ENCODE measurements at regions of chr2 and their contacts with region 1.

Region 1: GRCh38 chr2:84649487-84650142 is 133.3 kb downstream of the DNAH6 start:
- DNase-seq: no peak
- H3K4me3 Mint-ChIP-seq: no peak overlapping the region
- H3K27ac Mint-ChIP-seq: peak overlapping the region; percentile 7
- H3K4me1 Mint-ChIP-seq: peaks cover 59% of the 10 kb centered on the region
- H3K27me3 Mint-ChIP-seq: no peaks in the 10 kb centered on the region

Region 2: GRCh38 chr2:84619794-84620371 is 29.7 kb before region 1 on chr2:
- CTCF ChIA-PET with region 1: no interaction called
- POLR2A ChIA-PET with region 1: no interaction called
- intact Hi-C with region 1: no loop called
- DNase-seq: no peak
- H3K4me3 Mint-ChIP-seq: no peak overlapping the region
- H3K27ac Mint-ChIP-seq: no peak overlapping the region
- H3K4me1 Mint-ChIP-seq: no peaks in the 10 kb centered on the region
- H3K27me3 Mint-ChIP-seq: no peaks in the 10 kb centered on the region

Region 3: DNA sequence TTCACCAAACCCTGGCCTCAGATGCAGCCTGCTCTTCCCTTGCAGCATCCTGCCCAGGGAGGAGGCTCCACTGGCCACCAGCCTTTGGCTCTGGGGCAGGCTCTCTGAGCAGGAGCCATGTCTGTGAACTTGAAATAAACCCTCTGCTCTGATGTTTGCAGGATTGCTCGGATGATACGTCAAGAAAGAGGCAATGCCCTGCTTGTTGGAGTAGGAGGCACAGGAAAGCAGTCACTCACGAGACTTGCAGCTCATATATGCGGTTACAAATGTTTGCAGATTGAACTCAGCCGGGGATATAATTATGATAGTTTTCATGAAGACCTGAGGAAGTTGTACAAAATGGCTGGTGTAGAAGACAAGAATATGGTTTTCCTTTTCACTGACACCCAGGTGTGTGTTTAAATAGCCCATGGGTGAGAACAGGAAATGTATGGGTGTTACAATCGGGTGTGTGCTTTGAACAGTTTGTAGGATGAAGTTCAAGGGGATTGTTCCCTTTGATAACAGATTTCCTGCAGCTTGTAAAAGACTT is 44.5 kb after region 1 on chr2:
- CTCF ChIA-PET with region 1: no interaction called
- POLR2A ChIA-PET with region 1: no interaction called
- intact Hi-C with region 1: loop called (anchors 5 kb)
- DNase-seq: peak; percentile 25
- H3K4me3 Mint-ChIP-seq: peak overlapping the region; percentile 5
- H3K27ac Mint-ChIP-seq: peak overlapping the region; percentile 23
- H3K4me1 Mint-ChIP-seq: peaks cover 20% of the 10 kb centered on the region
- H3K27me3 Mint-ChIP-seq: no peaks in the 10 kb centered on the region

Region 4: DNA sequence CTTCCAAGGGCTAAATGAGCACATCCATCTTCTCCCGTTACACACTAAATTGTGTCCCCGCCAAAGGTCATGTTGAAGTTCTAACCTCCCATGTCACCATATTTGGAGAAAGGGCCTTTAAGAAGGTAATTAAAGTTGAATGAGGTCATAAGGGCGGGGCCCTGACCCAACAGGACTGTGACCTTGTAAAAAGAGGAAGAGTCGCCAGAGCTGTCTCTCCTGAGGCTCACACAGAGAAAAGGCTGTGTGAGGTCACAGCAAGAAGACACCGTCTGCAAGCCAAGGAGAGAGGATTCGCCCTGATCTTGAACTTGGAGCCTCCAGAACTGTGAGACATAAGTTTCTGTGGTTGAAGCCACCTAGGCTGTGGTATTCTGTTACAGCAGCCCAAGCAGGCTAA is 207.2 kb after region 1 on chr2:
- CTCF ChIA-PET with region 1: no interaction called
- POLR2A ChIA-PET with region 1: no interaction called
- intact Hi-C with region 1: loop called (anchors 5 kb)
- DNase-seq: peak; percentile 66
- H3K4me3 Mint-ChIP-seq: no peak overlapping the region
- H3K27ac Mint-ChIP-seq: peak overlapping the region; percentile 46
- H3K4me1 Mint-ChIP-seq: peaks cover 91% of the 10 kb centered on the region
- H3K27me3 Mint-ChIP-seq: no peaks in the 10 kb centered on the region